K562 (cell line): ENCODE measurements at regions of chr12 and their contacts with region 1.

Region 1: DNA sequence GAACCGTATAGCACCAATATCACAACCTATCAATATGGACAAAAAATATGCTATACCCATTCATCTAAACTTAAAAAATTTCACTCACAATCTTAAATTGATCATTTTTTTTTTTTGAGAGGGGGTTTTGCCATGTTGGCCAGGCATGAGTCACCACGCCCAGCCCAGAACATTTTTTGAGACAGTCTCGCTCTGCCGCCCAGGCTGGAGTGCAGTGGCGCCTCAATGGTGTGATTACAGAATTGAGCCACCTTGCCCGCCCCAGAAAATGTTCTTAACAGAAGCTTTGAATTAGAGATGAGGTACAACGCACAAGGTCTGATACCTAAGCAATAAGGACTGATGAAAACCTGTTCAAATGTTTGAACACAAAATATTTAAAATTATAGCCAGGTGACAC is 15.8 kb upstream of the ATP5F1B start:
- DNase-seq: no peak
- ATAC-seq: peak; percentile 21; the same call in 2 of the 3 replicates
- H3K4me3 ChIP-seq: no peak overlapping the region
- H3K27ac ChIP-seq: no peak overlapping the region
- H3K4me1 ChIP-seq: no peaks in the 10 kb centered on the region; a peak in 1 of 5 replicates
- H3K27me3 ChIP-seq: no peaks in the 10 kb centered on the region
- CTCF ChIP-seq: no peak
- EP300 ChIP-seq: no peak
- POLR2A ChIP-seq: no peak
- RAD21 ChIP-seq: no peak

Region 2: GRCh38 chr12:56645717-56646446 is 15.7 kb before region 1 on chr12 and contains the start of gene ATP5F1B:
- CTCF ChIA-PET with region 1: no interaction called
- POLR2A ChIA-PET with region 1: interaction called, 13 read pairs
- in situ Hi-C with region 1: no loop called
- intact Hi-C with region 1: no loop called
- DNase-seq: peak; percentile 90 to 99 (median 96)
- ATAC-seq: peak; percentile 98
- H3K4me3 ChIP-seq: peak within 1 kb of the TSS; percentile 81
- H3K27ac ChIP-seq: peak within 1 kb of the TSS; percentile 96
- H3K4me1 ChIP-seq: peaks cover 4 to 19% of the 10 kb centered on the region in 2 experiments
- H3K27me3 ChIP-seq: no peaks in the 10 kb centered on the region
- CTCF ChIP-seq: no peak; a peak in 1 of 6 replicates
- EP300 ChIP-seq: peak; percentile 14; the same call in 1 of the 2 replicates
- POLR2A ChIP-seq: peak; percentile 99
- RAD21 ChIP-seq: no peak
- polyA plus RNA-seq, gene ATP5F1B: 1,043 to 1,482 TPM

Region 3: GRCh38 chr12:56677680-56678079 is 16.1 kb after region 1 on chr12:
- CTCF ChIA-PET with region 1: no interaction called
- POLR2A ChIA-PET with region 1: interaction called, 17 read pairs
- in situ Hi-C with region 1: no loop called
- intact Hi-C with region 1: no loop called
- DNase-seq: no peak
- ATAC-seq: no peak
- H3K4me3 ChIP-seq: no peak overlapping the region
- H3K27ac ChIP-seq: peak overlapping the region; percentile 3; the same call in 1 of the 3 replicates
- H3K4me1 ChIP-seq: peaks cover 21 to 63% of the 10 kb centered on the region in 2 experiments; a peak in 4 of 5 replicates
- H3K27me3 ChIP-seq: no peaks in the 10 kb centered on the region
- CTCF ChIP-seq: no peak
- EP300 ChIP-seq: no peak
- POLR2A ChIP-seq: no peak
- RAD21 ChIP-seq: no peak

Region 4: DNA sequence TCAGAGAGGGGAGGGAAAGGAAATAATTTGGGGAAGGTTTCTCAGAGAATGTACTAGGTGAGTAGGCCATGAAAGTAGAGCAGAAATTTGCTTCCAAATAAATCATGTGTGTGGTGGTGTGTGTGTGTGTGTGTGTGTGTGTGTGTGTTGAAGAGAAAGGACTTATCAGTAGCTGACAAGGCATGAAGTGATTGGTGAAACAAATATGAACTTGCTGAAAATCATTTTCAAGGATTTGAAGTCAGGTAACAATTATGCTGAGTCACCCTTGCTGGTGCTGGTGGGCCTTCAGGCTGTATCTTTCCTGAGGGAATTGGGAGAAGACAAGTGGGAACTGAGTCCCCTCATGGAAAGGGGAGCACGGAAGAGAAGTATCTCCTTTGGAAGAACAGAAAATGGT is 157.1 kb after region 1 on chr12:
- CTCF ChIA-PET with region 1: no interaction called
- POLR2A ChIA-PET with region 1: no interaction called
- in situ Hi-C with region 1: no loop called
- intact Hi-C with region 1: no loop called
- DNase-seq: no peak
- ATAC-seq: no peak
- H3K4me3 ChIP-seq: no peak overlapping the region
- H3K27ac ChIP-seq: no peak overlapping the region
- H3K4me1 ChIP-seq: no peaks in the 10 kb centered on the region; a peak in 1 of 5 replicates
- H3K27me3 ChIP-seq: no peaks in the 10 kb centered on the region
- CTCF ChIP-seq: no peak
- EP300 ChIP-seq: no peak
- POLR2A ChIP-seq: no peak
- RAD21 ChIP-seq: no peak